Aorta (tissue), 5 donors: ENCODE measurements at regions of chr17 and their contacts with region 1.

Region 1: DNA sequence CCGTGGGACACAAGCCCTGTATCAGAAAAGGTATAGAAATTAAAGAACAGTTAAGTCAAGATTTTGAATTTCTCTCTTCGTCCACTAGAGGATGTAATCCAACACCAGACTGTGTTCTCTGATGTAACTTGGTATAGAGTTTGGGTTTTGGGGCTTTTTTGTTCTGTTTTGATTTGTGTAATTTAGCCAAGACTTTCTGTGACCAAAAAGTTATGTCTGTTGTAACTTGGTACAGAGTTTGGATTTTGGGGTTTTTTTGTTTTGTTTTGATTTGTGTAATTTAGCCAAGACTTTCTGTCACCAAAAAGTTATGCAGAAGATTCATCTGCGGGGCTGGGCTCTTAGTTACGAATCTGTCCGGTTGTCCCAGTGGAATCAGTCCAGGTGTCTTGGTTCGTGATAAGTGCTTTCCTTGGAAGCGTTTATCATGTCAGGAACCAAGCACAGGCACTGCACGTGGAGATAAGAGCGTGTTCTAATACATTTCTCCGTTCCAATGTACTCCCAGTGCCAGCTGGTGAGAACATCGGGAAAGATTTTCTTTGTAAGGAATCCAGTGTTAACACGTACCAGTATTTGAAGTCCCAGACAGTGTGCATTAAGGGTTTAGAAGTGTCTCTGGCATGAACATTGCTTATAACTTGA is 44.1 kb upstream of the SEC14L1 start:
- DNase-seq: no peak
- ATAC-seq: peak; percentile 73
- H3K4me3 ChIP-seq: no peak overlapping the region
- H3K27ac ChIP-seq: peak overlapping the region in 1 of 2 donors; percentile 42
- H3K4me1 ChIP-seq: no peaks in the 10 kb centered on the region
- H3K27me3 ChIP-seq: no peaks in the 10 kb centered on the region

Region 2: DNA sequence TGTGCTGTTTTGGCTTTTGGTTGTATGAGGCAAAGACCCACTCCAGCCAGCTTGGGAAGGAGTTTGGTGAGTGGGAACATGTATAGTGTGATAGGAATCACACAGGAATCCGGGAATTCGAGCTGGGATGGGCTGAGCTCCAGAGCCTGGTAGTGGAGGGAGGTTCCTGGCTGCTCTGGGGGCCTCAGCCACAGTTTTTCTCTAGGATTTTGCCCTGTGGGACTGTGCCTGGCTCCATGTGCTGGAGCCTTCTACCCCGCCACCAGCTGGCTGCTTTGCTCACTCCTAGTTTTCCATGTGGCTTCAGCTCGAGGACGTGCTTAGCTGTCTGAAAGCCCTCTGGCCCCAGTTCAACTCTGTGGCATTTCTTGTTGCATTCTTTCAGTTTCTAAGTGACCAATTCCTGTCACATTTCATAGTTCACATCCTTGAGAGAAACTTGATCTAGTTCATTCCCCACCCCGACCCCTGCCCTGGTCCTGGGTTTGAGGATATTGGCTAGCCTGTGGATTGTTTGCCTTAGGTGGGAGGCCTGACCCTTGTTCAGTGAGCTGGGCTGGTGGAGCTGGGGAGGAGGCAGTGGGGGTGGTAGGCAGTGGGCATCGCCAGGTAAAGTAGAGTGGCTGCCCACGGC is 49.0 kb after region 1 on chr17:
- intact Hi-C with region 1: loop called in 1 of 2 experiments (anchors 5 kb)
- DNase-seq: peak; percentile 80 to 88
- ATAC-seq: peak; percentile 68
- H3K4me3 ChIP-seq: no peak overlapping the region
- H3K27ac ChIP-seq: peak overlapping the region in 1 of 2 donors; percentile 6
- H3K4me1 ChIP-seq: no peaks in the 10 kb centered on the region
- H3K27me3 ChIP-seq: no peaks in the 10 kb centered on the region

Region 3: GRCh38 chr17:77208217-77208808 is 111.6 kb after region 1 on chr17:
- intact Hi-C with region 1: loop called in 1 of 2 experiments (anchors 5 kb)
- DNase-seq: peak in 1 of 2 donors; percentile 37
- ATAC-seq: peak; percentile 77
- H3K4me3 ChIP-seq: no peak overlapping the region
- H3K27ac ChIP-seq: no peak overlapping the region
- H3K4me1 ChIP-seq: no peaks in the 10 kb centered on the region
- H3K27me3 ChIP-seq: no peaks in the 10 kb centered on the region

Region 4: DNA sequence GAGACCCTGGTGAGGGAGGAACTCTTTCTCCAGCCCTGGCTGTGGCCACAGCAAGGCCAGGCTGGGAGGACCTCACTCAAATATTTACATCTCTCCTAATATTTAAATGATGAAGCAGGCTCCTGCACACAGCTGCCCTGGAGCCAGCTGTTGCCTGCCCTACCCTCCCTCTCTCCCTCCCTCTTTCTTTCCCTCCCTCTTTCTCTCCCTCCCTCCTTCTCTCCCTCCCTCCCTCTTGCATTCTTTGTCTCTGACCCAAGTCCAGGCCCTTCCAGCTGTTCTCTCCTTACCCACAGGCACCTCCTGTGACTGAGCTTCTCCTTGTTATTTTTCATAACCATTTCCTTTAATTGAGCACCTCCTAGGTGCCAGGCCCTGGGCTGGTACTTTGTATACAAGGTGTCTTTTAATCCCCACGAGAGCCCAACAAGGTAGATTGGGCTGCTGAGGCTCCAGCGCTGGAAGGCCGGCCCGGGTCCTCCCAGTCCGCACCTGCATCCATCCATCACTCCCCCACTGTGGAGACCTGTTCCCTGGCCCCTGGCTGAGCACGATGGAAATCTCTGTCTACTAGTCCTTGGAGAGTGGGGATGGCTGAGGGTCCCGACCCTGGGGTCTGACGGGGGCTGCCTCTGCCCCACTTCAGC is 286.4 kb after region 1 on chr17:
- intact Hi-C with region 1: no loop called
- DNase-seq: no peak
- ATAC-seq: no peak
- H3K4me3 ChIP-seq: no peak overlapping the region
- H3K27ac ChIP-seq: no peak overlapping the region
- H3K4me1 ChIP-seq: no peaks in the 10 kb centered on the region
- H3K27me3 ChIP-seq: no peaks in the 10 kb centered on the region